Heart left ventricle (tissue), 16 donors: ENCODE measurements at regions of chr11 and their contacts with region 1.

Region 1: DNA sequence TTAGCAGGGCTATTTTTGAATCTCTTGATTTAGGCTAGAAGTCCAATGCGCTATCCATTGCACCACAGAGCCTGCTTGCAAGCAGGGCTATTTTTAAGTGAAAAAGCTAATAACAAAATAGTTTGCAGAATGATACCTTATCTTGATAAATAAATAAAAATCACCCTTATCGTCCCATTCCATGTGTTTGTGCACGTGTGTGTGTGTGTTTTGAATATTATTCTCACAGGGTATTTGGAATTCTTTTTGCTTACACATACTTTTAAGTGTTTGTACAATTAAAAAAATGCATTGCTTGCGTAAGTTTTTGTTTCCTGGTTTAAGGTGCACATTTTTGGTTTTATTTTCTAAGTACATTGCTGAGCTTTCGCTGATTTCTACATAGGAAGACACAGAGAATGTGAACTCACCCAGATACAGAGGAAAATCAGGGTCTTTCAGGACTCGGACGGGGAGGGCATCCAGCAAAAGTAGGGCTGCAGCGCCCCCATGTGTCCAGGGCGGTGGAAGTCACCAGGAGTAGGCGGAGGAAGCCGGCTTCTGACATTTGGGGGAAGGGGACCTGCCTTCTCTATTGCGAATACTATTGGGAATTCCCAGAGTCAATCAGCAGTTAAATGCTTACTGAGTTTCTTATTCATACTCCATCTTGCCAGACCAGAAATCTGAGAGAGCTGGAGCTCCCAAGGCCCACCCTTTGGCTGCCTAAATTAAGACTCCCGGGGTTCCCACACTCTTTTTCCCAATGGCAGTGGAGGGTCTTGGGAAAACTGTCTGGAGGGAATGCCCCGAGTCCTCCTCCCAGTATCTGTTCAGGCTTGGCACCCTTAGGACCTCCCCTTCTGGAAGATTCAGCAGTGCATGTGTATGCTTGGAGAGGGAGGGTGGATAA is 27.2 kb downstream of the SLC1A2 start:
- DNase-seq: peak; percentile 78 to 89 (median 81)
- ATAC-seq: peak; percentile 83 to 95 (median 92)
- H3K4me3 ChIP-seq: peak overlapping the region in 3 of 12 donors; percentile 6 to 25 (median 6)
- H3K27ac ChIP-seq: no peak overlapping the region
- H3K4me1 ChIP-seq: peaks cover 0 to 20% (median 6%) of the 10 kb centered on the region in 12 donors
- H3K27me3 ChIP-seq: no peaks in the 10 kb centered on the region
- CTCF ChIP-seq: peak; percentile 74 to 97 (median 89)
- POLR2A ChIP-seq: no peak

Region 2: GRCh38 chr11:34519595-34520235 is 872.5 kb before region 1 on chr11:
- intact Hi-C with region 1: loop called in 2 of 10 experiments (anchors 5 kb)
- DNase-seq: no peak
- ATAC-seq: no peak
- H3K4me3 ChIP-seq: no peak overlapping the region
- H3K27ac ChIP-seq: no peak overlapping the region
- H3K4me1 ChIP-seq: no peaks in the 10 kb centered on the region
- H3K27me3 ChIP-seq: peaks cover 0 to 3% (median 0%) of the 10 kb centered on the region in 9 donors
- CTCF ChIP-seq: no peak
- POLR2A ChIP-seq: no peak

Region 3: GRCh38 chr11:34926101-34926830 is 465.9 kb before region 1 on chr11:
- intact Hi-C with region 1: loop called (anchors 1 to 5 kb)
- DNase-seq: no peak
- ATAC-seq: peak in 3 of 4 donors; percentile 58 to 78 (median 77)
- H3K4me3 ChIP-seq: no peak overlapping the region
- H3K27ac ChIP-seq: peak overlapping the region in 1 of 12 donors; percentile 34
- H3K4me1 ChIP-seq: peaks cover 0 to 59% (median 27%) of the 10 kb centered on the region in 12 donors
- H3K27me3 ChIP-seq: no peaks in the 10 kb centered on the region
- CTCF ChIP-seq: peak; percentile 58 to 83 (median 70)
- POLR2A ChIP-seq: no peak

Region 4: DNA sequence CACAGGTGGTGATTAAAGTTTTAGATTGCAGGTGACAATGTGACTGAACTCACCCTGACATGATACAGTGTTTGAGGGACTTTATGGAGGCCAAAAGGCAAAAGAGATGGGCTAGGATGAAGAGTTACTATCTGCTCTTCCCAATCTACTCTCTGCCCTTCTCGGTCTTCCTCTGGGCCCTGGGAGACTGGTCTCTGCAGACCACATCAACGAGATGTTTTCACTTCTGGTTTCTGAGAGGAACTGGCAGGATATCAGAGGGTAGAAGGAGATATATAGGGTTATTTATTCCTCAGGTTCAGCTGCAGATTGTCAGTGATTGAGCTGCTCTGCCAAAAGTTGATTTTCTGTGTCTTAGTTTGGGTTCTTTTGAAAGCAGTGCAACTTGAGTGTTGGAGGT is 285.6 kb before region 1 on chr11:
- intact Hi-C with region 1: loop called in 1 of 10 experiments (anchors 10 kb)
- DNase-seq: no peak
- ATAC-seq: no peak
- H3K4me3 ChIP-seq: no peak overlapping the region
- H3K27ac ChIP-seq: no peak overlapping the region
- H3K4me1 ChIP-seq: peaks cover 0 to 44% (median 20%) of the 10 kb centered on the region in 12 donors
- H3K27me3 ChIP-seq: no peaks in the 10 kb centered on the region
- CTCF ChIP-seq: no peak
- POLR2A ChIP-seq: no peak

Region 5: GRCh38 chr11:35246745-35247144 is 145.4 kb before region 1 on chr11:
- intact Hi-C with region 1: loop called in 1 of 10 experiments (anchors 10 kb)
- DNase-seq: peak in 4 of 5 donors; percentile 29 to 59 (median 46)
- ATAC-seq: peak; percentile 80 to 95 (median 91)
- H3K4me3 ChIP-seq: no peak overlapping the region
- H3K27ac ChIP-seq: peak overlapping the region; percentile 17 to 91 (median 72)
- H3K4me1 ChIP-seq: peaks cover 0 to 29% (median 16%) of the 10 kb centered on the region in 12 donors
- H3K27me3 ChIP-seq: no peaks in the 10 kb centered on the region
- CTCF ChIP-seq: no peak
- POLR2A ChIP-seq: no peak